H1 (cell line): ENCODE measurements at regions of chr13 and their contacts with region 1.

Region 1: GRCh38 chr13:110548891-110549794 is 12.4 kb downstream of the RAB20 start:
- DNase-seq: no peak
- H3K4me3 ChIP-seq: no peak overlapping the region
- H3K27ac ChIP-seq: no peak overlapping the region
- H3K4me1 ChIP-seq: peaks cover 0 to 4% (median under 1%) of the 10 kb centered on the region in 4 experiments; a peak in 2 of 7 replicates
- H3K27me3 ChIP-seq: no peaks in the 10 kb centered on the region
- CTCF ChIP-seq: no peak
- EP300 ChIP-seq: no peak
- POLR2A ChIP-seq: no peak
- RAD21 ChIP-seq: no peak

Region 2: GRCh38 chr13:110525328-110526319 is 23.5 kb before region 1 on chr13:
- CTCF ChIA-PET with region 1: interaction called, 10 read pairs
- POLR2A ChIA-PET with region 1: no interaction called
- DNase-seq: no peak
- H3K4me3 ChIP-seq: no peak overlapping the region
- H3K27ac ChIP-seq: no peak overlapping the region
- H3K4me1 ChIP-seq: peaks cover 2 to 18% (median 6%) of the 10 kb centered on the region in 4 experiments; a peak in 5 of 7 replicates
- H3K27me3 ChIP-seq: no peaks in the 10 kb centered on the region
- CTCF ChIP-seq: no peak
- EP300 ChIP-seq: no peak
- POLR2A ChIP-seq: no peak
- RAD21 ChIP-seq: peak in 1 of 2 experiments; percentile 16; a peak in 1 of 4 replicates

Region 3: GRCh38 chr13:110628477-110628793 is 79.3 kb after region 1 on chr13:
- CTCF ChIA-PET with region 1: no interaction called
- POLR2A ChIA-PET with region 1: no interaction called
- DNase-seq: no peak
- H3K4me3 ChIP-seq: no peak overlapping the region
- H3K27ac ChIP-seq: no peak overlapping the region
- H3K4me1 ChIP-seq: no peaks in the 10 kb centered on the region; a peak in 1 of 7 replicates
- H3K27me3 ChIP-seq: no peaks in the 10 kb centered on the region
- CTCF ChIP-seq: no peak
- EP300 ChIP-seq: no peak
- POLR2A ChIP-seq: no peak
- RAD21 ChIP-seq: no peak